Calu3 (cell line): ENCODE measurements at regions of chr12 and their contacts with region 1.

Region 1: DNA sequence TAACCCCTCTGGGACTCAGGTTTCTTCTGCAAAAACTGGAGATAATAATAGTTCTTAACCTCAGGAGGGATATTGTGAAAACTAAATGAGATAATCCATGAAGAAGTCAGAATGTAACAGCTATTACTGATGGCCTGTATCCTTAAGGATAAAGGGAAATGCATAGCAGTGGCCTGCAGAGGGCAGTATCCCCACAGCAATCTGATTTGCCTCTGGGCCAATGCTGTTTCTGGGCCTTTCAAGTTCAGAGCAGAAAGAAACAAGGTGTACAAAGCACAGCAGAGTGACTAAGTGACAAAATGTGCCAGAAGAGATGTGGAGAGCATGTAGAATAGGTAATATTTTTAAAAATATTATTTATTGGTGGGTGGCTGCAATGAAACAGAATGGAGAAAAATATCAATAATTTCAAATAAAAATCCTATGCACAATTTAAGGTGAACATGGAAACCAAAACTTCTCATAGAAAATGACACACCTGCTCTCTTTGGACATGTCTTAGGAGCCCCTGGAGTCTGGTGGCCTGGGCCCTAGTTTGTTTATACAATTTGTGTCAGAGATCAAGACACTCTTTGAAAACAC is 90.3 kb downstream of the C12orf75 start:
- DNase-seq: peak; percentile 85
- H3K4me3 Mint-ChIP-seq: no peak overlapping the region
- H3K27ac Mint-ChIP-seq: no peak overlapping the region
- H3K4me1 Mint-ChIP-seq: peaks cover 23% of the 10 kb centered on the region
- H3K27me3 Mint-ChIP-seq: no peaks in the 10 kb centered on the region
- CTCF ChIP-seq: peak; percentile 85

Region 2: DNA sequence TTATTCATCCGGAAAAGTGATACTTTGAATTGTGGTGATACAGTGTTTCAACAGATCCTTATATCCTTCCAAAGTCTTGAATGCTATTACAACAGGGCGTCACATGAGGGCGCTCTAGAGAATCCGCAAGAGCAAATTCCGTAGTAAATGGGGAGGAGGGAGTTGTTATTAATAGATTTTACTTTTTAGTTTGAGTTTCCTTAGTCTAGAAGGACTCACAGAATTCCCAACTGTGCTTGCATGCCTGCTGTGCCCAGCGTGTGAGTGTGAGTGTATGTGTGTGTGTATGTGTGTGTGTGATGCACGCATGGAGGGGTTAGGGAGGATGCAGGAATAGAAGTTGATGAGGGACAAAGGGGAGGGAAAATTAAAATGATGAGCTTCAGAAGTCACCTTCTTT is 285.0 kb after region 1 on chr12:
- CTCF ChIA-PET with region 1: interaction called, 10 read pairs
- intact Hi-C with region 1: loop called (anchors 2 kb)
- DNase-seq: peak; percentile 55
- H3K4me3 Mint-ChIP-seq: no peak overlapping the region
- H3K27ac Mint-ChIP-seq: no peak overlapping the region
- H3K4me1 Mint-ChIP-seq: no peaks in the 10 kb centered on the region
- H3K27me3 Mint-ChIP-seq: peaks cover 20% of the 10 kb centered on the region
- CTCF ChIP-seq: peak; percentile 71

Region 3: DNA sequence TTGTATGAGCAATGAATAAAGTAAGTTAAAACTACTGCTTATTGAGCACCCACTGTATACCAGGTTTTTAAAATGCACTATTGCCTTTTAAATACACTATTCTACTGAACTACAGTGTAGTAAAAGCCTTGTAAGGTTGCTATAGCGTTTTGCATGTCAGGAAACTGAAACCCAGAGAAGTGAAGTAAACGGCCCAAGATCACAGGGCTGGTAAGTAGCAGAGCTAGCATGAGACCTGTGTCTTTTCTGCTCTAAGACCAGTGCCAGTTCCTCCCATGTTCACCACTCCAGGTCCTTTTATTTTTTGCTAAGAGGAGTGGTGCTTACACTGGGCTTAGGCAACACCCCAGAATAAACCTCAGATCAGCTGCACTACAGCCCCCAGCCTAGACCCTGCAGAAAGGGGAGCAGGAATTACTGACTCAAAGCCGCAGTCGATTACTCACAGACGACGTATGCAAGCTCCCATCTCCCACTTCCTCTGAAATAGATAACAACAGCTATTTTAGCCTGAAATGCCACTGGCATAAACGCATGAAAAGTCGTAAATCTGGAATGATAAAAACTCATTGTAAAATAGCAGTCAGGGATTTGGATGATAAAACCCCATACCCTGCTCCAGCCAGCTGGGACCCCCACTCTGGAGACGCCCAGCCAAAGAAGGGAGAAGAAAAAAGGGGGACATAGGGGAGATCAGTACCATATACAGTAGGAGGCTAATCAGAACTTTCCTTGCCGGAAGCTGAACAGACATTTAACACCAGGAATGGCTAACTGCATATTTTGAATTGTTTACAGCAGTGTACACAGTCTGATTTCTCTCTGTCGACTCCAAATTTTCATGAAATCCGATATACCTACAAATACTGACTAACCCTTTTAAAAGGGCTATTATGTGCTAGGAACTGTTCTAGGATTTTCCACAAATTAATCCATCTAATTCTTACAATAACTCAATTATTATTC is 609.7 kb after region 1 on chr12:
- CTCF ChIA-PET with region 1: no interaction called
- intact Hi-C with region 1: loop called (anchors 10 kb)
- DNase-seq: peak; percentile 55
- H3K4me3 Mint-ChIP-seq: peak overlapping the region; percentile 45
- H3K27ac Mint-ChIP-seq: peak overlapping the region; percentile 35
- H3K4me1 Mint-ChIP-seq: peaks cover 49% of the 10 kb centered on the region
- H3K27me3 Mint-ChIP-seq: no peaks in the 10 kb centered on the region
- CTCF ChIP-seq: no peak

Region 4: GRCh38 chr12:106136263-106136662 is 715.5 kb after region 1 on chr12:
- CTCF ChIA-PET with region 1: interaction called, 26 read pairs
- intact Hi-C with region 1: loop called (anchors 1 kb)
- DNase-seq: peak; percentile 92
- H3K4me3 Mint-ChIP-seq: peak overlapping the region; percentile 78
- H3K27ac Mint-ChIP-seq: no peak overlapping the region
- H3K4me1 Mint-ChIP-seq: peaks cover 57% of the 10 kb centered on the region
- H3K27me3 Mint-ChIP-seq: no peaks in the 10 kb centered on the region
- CTCF ChIP-seq: peak; percentile 85

Region 5: GRCh38 chr12:106149096-106149784 is 728.5 kb after region 1 on chr12:
- CTCF ChIA-PET with region 1: interaction called, 21 read pairs
- intact Hi-C with region 1: loop called (anchors 1 kb)
- DNase-seq: peak; percentile 64
- H3K4me3 Mint-ChIP-seq: no peak overlapping the region
- H3K27ac Mint-ChIP-seq: no peak overlapping the region
- H3K4me1 Mint-ChIP-seq: peaks cover 15% of the 10 kb centered on the region
- H3K27me3 Mint-ChIP-seq: peaks cover 16% of the 10 kb centered on the region
- CTCF ChIP-seq: peak; percentile 69

Region 6: GRCh38 chr12:106205208-106206071 is 784.7 kb after region 1 on chr12:
- CTCF ChIA-PET with region 1: no interaction called
- intact Hi-C with region 1: loop called (anchors 1 kb)
- DNase-seq: peak; percentile 73
- H3K4me3 Mint-ChIP-seq: no peak overlapping the region
- H3K27ac Mint-ChIP-seq: no peak overlapping the region
- H3K4me1 Mint-ChIP-seq: no peaks in the 10 kb centered on the region
- H3K27me3 Mint-ChIP-seq: peaks cover 61% of the 10 kb centered on the region
- CTCF ChIP-seq: no peak